Calu3 (cell line): ENCODE measurements at regions of chr1 and their contacts with region 1.

Region 1: DNA sequence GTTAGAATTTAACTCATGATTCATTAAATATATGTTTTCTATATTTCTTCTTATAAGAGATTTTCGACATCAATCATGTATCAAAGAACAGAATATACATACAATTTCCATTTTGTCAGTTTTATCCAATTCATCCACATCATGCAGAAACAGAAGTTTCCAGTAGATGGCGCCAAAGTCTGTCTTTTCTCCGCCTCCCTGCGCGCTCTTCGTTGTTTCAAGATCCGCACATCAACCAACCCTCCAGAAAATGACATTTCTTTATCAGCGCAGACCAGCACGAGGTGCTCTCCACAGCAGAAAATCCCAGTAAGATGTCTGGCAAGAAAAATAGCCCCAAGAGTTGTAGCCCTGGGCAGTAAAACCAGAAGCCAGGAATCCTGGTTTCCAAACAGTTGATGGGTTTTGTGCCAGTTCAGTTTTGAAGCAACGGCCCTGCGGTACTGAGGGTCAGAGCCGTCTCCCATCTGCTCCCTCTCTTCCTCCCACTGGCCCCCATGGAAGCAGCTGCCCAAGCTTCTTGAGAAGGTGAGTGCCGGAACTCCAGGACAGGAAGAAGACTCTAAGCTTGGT is 38.6 kb upstream of the GPR137B start:
- DNase-seq: peak; percentile 60
- H3K4me3 Mint-ChIP-seq: no peak overlapping the region
- H3K27ac Mint-ChIP-seq: no peak overlapping the region
- H3K4me1 Mint-ChIP-seq: no peaks in the 10 kb centered on the region
- H3K27me3 Mint-ChIP-seq: no peaks in the 10 kb centered on the region
- CTCF ChIP-seq: peak; percentile 85

Region 2: GRCh38 chr1:236156512-236157208 is 52.9 kb after region 1 on chr1:
- CTCF ChIA-PET with region 1: no interaction called
- intact Hi-C with region 1: no loop called
- DNase-seq: no peak
- H3K4me3 Mint-ChIP-seq: no peak overlapping the region
- H3K27ac Mint-ChIP-seq: no peak overlapping the region
- H3K4me1 Mint-ChIP-seq: no peaks in the 10 kb centered on the region
- H3K27me3 Mint-ChIP-seq: no peaks in the 10 kb centered on the region
- CTCF ChIP-seq: no peak

Region 3: GRCh38 chr1:236239092-236239585 is 135.4 kb after region 1 on chr1:
- CTCF ChIA-PET with region 1: no interaction called
- intact Hi-C with region 1: no loop called
- DNase-seq: no peak
- H3K4me3 Mint-ChIP-seq: no peak overlapping the region
- H3K27ac Mint-ChIP-seq: no peak overlapping the region
- H3K4me1 Mint-ChIP-seq: no peaks in the 10 kb centered on the region
- H3K27me3 Mint-ChIP-seq: no peaks in the 10 kb centered on the region
- CTCF ChIP-seq: no peak

Region 4: DNA sequence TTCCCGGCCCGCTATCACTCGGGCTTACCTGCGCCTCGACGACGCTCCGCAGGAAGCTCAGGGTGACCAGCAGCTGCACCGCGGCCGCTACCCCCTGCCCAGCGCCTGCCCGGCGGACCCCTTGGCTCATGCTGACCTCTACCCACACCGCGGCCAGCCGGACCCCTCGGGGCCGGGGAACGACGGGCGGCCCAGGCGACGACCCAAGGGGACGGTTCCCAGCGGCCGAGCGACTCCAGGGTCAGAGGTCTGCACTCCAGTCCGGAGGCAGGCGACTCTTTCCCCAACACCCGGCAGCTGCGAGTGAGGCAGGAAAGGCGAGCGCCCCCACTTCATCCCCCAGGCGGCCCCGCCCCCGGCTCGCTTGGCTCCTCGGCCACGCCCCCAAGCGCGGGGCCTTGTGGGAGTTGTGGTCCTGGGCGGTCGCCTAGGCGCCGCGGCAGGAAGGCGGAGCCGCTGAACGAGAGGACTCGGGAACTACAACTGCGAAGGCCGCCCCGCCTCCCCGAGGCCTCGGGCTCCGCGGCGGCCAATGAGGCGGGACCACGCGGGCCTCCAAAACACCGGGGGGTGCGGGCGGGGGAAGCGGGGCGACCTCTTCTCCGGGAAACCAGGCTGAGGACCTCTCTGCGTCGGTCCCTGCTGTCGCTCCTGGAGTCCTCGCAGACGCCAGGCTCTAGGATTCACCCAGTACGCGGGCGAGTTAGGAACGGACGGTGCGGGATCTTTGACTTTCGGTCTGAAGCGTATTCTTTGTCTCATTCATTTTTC is 178.1 kb after region 1 on chr1 and contains the start of gene ERO1B:
- CTCF ChIA-PET with region 1: no interaction called
- intact Hi-C with region 1: loop called (anchors 5 kb)
- DNase-seq: peak; percentile 98
- H3K4me3 Mint-ChIP-seq: peak within 1 kb of the TSS; percentile 70
- H3K27ac Mint-ChIP-seq: peak within 1 kb of the TSS; percentile 54
- H3K4me1 Mint-ChIP-seq: peaks cover 23% of the 10 kb centered on the region
- H3K27me3 Mint-ChIP-seq: peaks cover 42% of the 10 kb centered on the region
- CTCF ChIP-seq: no peak
- total RNA-seq, gene ERO1B: 4.4 and 6.4 TPM in 2 replicates

Region 5: GRCh38 chr1:236489710-236490377 is 386.1 kb after region 1 on chr1:
- CTCF ChIA-PET with region 1: interaction called, 4 read pairs
- intact Hi-C with region 1: loop called (anchors 1 kb)
- DNase-seq: peak; percentile 16
- H3K4me3 Mint-ChIP-seq: no peak overlapping the region
- H3K27ac Mint-ChIP-seq: no peak overlapping the region
- H3K4me1 Mint-ChIP-seq: no peaks in the 10 kb centered on the region
- H3K27me3 Mint-ChIP-seq: peaks cover 8% of the 10 kb centered on the region
- CTCF ChIP-seq: peak; percentile 63

Region 6: DNA sequence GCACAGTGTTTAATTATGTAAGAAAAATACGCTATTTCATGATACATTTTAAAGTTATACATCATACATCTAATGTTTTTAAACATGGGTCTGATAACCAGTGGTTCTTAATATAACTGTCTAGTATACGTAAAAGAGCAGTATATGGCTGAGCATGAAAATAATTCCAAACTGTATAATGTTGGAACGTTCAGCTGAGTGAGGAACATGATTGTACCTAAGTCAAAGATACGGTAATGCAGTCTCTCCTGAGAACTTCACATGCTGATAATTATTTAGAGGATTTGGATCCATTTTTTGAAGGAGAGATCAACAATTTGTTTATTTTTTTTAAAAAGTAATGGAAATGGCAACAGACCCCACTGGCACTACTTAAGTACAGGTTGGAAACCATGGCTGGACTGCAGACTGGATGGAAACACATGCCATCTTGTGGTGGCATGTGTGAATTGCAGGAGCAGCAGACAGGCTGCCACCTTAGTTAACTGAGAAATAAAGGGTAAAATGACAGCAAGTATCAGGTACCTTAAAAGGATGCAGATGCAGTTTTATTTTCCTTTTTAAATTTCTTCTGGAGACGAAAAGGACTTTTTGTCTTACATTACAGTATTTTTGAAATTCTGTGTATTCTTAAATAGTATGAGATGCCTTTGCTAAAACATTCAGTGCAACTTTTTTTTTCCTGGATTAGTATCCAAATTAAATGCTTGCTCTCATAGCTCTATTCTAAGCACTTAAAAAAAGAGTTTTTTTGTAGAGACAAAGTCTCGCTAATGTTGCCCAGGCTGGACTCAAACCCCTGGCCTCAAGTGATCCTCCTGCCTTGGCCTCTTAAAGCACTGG is 765.1 kb after region 1 on chr1:
- CTCF ChIA-PET with region 1: no interaction called
- intact Hi-C with region 1: loop called (anchors 2 kb)
- DNase-seq: peak; percentile 52
- H3K4me3 Mint-ChIP-seq: no peak overlapping the region
- H3K27ac Mint-ChIP-seq: no peak overlapping the region
- H3K4me1 Mint-ChIP-seq: no peaks in the 10 kb centered on the region
- H3K27me3 Mint-ChIP-seq: no peaks in the 10 kb centered on the region
- CTCF ChIP-seq: peak; percentile 94

Region 7: GRCh38 chr1:237562242-237562823 is 1458.6 kb after region 1 on chr1:
- CTCF ChIA-PET with region 1: no interaction called
- intact Hi-C with region 1: loop called (anchors 5 kb)
- DNase-seq: peak; percentile 18
- H3K4me3 Mint-ChIP-seq: no peak overlapping the region
- H3K27ac Mint-ChIP-seq: no peak overlapping the region
- H3K4me1 Mint-ChIP-seq: no peaks in the 10 kb centered on the region
- H3K27me3 Mint-ChIP-seq: no peaks in the 10 kb centered on the region
- CTCF ChIP-seq: peak; percentile 76